ENCODE measurements at regions of chr13 and their contacts with region 1.

Region 1: DNA sequence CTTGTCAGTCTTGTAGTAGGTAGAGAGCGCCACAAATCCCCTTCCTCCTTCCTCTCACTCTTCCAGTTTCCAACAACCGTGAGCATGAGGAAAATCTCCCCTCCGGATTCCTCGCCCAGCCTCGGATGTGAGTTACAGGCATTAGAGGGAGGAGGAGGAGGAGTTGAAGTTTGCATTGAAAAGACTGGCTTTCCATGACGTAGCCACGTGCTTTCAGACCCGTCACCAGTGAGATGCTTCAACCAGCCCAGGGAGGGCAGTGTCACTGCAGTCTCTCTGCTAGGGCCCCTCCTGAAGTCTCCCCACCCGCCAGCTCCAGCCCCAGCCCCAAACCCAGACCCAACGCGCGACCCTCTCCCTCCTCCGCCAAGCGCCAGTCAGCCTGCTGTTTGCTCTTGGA is 442 bp upstream of the FGF14 start:
- DNase-seq: peak; percentile 11 to 42
- ATAC-seq: peak; percentile 53 to 80 (median 60)
- H3K4me3 ChIP-seq: peak overlapping the region; percentile 7 to 67 (median 61)
- H3K27ac ChIP-seq: peak overlapping the region in 3 of 10 donors; percentile 1 to 52 (median 37)
- H3K4me1 ChIP-seq: peaks cover 0 to 23% (median 5%) of the 10 kb centered on the region in 9 donors
- H3K27me3 ChIP-seq: peaks cover 0 to 57% (median 25%) of the 10 kb centered on the region in 7 donors
- CTCF ChIP-seq: peak in 3 of 9 donors; percentile 27 to 38 (median 37)

Region 2: DNA sequence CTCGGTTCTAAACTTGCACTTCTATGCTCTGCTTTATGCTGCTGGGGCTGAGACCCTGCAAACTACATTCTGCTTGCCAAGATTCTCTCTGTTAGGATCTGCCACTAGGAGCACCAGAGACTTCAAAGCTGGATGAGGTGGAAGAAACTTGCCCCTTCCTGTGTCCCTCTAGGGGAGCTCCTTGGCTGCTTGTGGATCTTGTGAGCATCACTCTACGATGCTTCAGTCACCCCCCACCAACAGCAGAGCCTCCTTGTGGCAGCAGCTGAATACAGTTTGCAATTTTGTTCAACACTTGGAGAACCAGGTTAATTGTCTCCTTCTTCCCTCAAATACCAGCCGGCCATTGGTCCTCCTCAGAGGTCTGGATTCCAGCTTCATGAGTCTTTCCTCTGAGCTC is 311.1 kb before region 1 on chr13:
- intact Hi-C with region 1: loop called in 1 of 10 experiments (anchors 5 kb)
- DNase-seq: no peak
- ATAC-seq: peak in 2 of 8 donors; percentile 24 to 44
- H3K4me3 ChIP-seq: no peak overlapping the region
- H3K27ac ChIP-seq: peak overlapping the region in 2 of 10 donors; percentile 57 to 72
- H3K4me1 ChIP-seq: peaks cover 0 to 32% (median 0%) of the 10 kb centered on the region in 9 donors
- H3K27me3 ChIP-seq: no peaks in the 10 kb centered on the region
- CTCF ChIP-seq: peak in 3 of 9 donors; percentile 9 to 15 (median 15)

Measured in heart right ventricle (tissue), 16 donors.